ENCODE measurements at regions of chr10 and their contacts with region 1.

Region 1: GRCh38 chr10:79929409-79929904 is 19.4 kb downstream of the SFTPD start:
- DNase-seq: peak; percentile 65 to 84
- ATAC-seq: peak; percentile 77 to 92 (median 82)
- H3K4me3 ChIP-seq: no peak overlapping the region
- H3K4me3 Mint-ChIP-seq: no peak overlapping the region
- H3K27ac ChIP-seq: no peak overlapping the region
- H3K27ac Mint-ChIP-seq: no peak overlapping the region
- H3K4me1 ChIP-seq: no peaks in the 10 kb centered on the region
- H3K4me1 Mint-ChIP-seq: peaks cover 0 to 6% of the 10 kb centered on the region in 2 donors
- H3K27me3 ChIP-seq: peaks cover 3% of the 10 kb centered on the region
- H3K27me3 Mint-ChIP-seq: peaks cover 29 to 31% of the 10 kb centered on the region in 2 donors
- CTCF ChIP-seq: peak; percentile 77

Region 2: GRCh38 chr10:79542626-79543025 is 386.8 kb before region 1 on chr10:
- intact Hi-C with region 1: loop called (anchors 1 kb)
- DNase-seq: no peak
- ATAC-seq: peak in 1 of 3 donors; percentile 24
- H3K4me3 ChIP-seq: no peak overlapping the region
- H3K4me3 Mint-ChIP-seq: no peak overlapping the region
- H3K27ac ChIP-seq: no peak overlapping the region
- H3K27ac Mint-ChIP-seq: no peak overlapping the region
- H3K4me1 ChIP-seq: no peaks in the 10 kb centered on the region
- H3K4me1 Mint-ChIP-seq: no peaks in the 10 kb centered on the region
- H3K27me3 ChIP-seq: no peaks in the 10 kb centered on the region
- H3K27me3 Mint-ChIP-seq: peaks cover 0 to 8% of the 10 kb centered on the region in 2 donors
- CTCF ChIP-seq: no peak

Region 3: DNA sequence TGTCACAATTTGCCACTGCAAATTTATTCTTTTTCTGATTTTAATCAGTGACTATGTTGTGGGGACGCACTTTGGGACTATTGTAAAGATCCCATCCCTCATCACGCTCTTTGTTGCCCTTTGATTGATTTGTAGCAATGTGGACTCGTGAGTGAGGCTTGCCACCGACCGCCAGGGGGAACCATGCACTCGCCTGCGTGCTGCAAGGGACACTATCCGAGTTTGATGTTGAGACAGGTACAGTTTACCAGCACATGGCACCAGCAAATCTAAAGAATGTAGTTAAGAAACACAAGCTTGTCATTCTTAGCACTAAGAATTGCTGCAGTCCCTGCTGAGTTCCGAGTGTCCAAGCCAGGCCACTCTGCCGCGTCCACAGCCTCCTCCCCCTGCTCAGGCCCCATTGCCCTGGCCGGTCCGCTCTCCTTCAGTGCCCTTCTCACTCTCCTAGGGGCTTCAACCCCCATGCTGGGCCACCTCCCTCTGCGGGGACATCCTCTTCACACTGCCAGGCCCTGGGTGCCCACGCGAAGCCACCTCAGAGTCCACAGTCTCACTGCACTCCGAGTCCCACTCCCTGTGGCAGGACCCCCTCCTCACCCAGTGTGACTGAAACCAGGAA is 367.2 kb before region 1 on chr10:
- intact Hi-C with region 1: loop called (anchors 1 kb)
- DNase-seq: peak; percentile 37 to 72
- ATAC-seq: peak; percentile 63 to 78 (median 67)
- H3K4me3 ChIP-seq: no peak overlapping the region
- H3K4me3 Mint-ChIP-seq: no peak overlapping the region
- H3K27ac ChIP-seq: no peak overlapping the region
- H3K27ac Mint-ChIP-seq: no peak overlapping the region
- H3K4me1 ChIP-seq: peaks cover 5% of the 10 kb centered on the region
- H3K4me1 Mint-ChIP-seq: peaks cover 8 to 9% of the 10 kb centered on the region in 2 donors
- H3K27me3 ChIP-seq: no peaks in the 10 kb centered on the region
- H3K27me3 Mint-ChIP-seq: peaks cover 7 to 25% of the 10 kb centered on the region in 2 donors
- CTCF ChIP-seq: peak; percentile 64